CD14-positive monocyte (primary cell): ENCODE measurements at regions of chr17 and their contacts with region 1.

Region 1: DNA sequence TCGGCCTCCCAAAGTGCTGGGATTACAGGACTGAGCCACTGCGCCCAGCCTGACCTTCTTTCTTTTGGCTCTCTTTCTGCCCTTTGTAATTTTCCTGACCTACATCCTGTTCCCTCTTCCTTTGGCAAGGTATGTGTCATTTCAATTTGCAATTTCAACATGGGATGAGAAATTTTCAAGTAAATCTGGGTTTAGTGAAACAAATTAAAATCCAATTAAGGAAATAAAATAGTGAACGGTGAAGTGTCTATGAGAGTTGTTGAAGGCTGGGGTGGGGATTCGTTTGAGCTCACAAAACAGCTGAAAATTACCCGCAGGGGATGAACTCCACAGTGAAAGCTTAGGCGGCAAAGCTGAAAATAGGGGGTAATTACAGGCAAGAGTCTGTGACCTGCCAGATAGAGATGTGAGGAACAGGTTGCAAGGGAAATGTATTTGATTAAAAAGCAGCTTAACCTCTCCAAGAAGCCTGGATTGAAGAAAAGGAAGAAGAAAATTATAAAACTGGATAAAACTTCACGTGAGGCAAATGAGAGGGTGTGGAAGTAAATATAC is 277.7 kb downstream of the UTP18 start:
- DNase-seq: no peak
- H3K4me3 ChIP-seq: no peak overlapping the region
- H3K4me3 Mint-ChIP-seq: no peak overlapping the region
- H3K27ac ChIP-seq: no peak overlapping the region
- H3K27ac Mint-ChIP-seq: no peak overlapping the region
- H3K4me1 ChIP-seq: no peaks in the 10 kb centered on the region
- H3K4me1 Mint-ChIP-seq: no peaks in the 10 kb centered on the region
- H3K27me3 ChIP-seq: no peaks in the 10 kb centered on the region
- H3K27me3 Mint-ChIP-seq: no peaks in the 10 kb centered on the region
- CTCF ChIP-seq: no peak

Region 2: GRCh38 chr17:51298508-51299371 is 239.3 kb before region 1 on chr17:
- intact Hi-C with region 1: loop called in 1 of 2 experiments (anchors 5 kb)
- DNase-seq: peak in 2 of 3 donors; percentile 4 to 11
- H3K4me3 ChIP-seq: no peak overlapping the region
- H3K4me3 Mint-ChIP-seq: no peak overlapping the region
- H3K27ac ChIP-seq: peak overlapping the region in 1 of 2 donors; percentile 14
- H3K27ac Mint-ChIP-seq: peak overlapping the region in 1 of 7 donors; percentile 27
- H3K4me1 ChIP-seq: no peaks in the 10 kb centered on the region
- H3K4me1 Mint-ChIP-seq: no peaks in the 10 kb centered on the region
- H3K27me3 ChIP-seq: no peaks in the 10 kb centered on the region
- H3K27me3 Mint-ChIP-seq: no peaks in the 10 kb centered on the region
- CTCF ChIP-seq: peak; percentile 71

Region 3: GRCh38 chr17:51362818-51363585 is 175.1 kb before region 1 on chr17:
- intact Hi-C with region 1: loop called in 1 of 2 experiments (anchors 10 kb)
- DNase-seq: no peak
- H3K4me3 ChIP-seq: no peak overlapping the region
- H3K4me3 Mint-ChIP-seq: no peak overlapping the region
- H3K27ac ChIP-seq: no peak overlapping the region
- H3K27ac Mint-ChIP-seq: no peak overlapping the region
- H3K4me1 ChIP-seq: peaks cover 8 to 10% of the 10 kb centered on the region in 2 donors
- H3K4me1 Mint-ChIP-seq: peaks cover 13% of the 10 kb centered on the region
- H3K27me3 ChIP-seq: no peaks in the 10 kb centered on the region
- H3K27me3 Mint-ChIP-seq: peaks cover 9 to 16% (median 11%) of the 10 kb centered on the region in 3 donors
- CTCF ChIP-seq: no peak